ENCODE measurements at regions of chr3 and their contacts with region 1.

Region 1: GRCh38 chr3:125062888-125063618 is 7.3 kb upstream of the HEG1 start:
- DNase-seq: peak; percentile 71
- H3K4me3 ChIP-seq: no peak overlapping the region
- H3K27ac ChIP-seq: peak overlapping the region; percentile 25
- H3K4me1 ChIP-seq: peaks cover 20% of the 10 kb centered on the region
- H3K27me3 ChIP-seq: no peaks in the 10 kb centered on the region
- CTCF ChIP-seq: no peak
- POLR2A ChIP-seq: peak; percentile 51

Region 2: GRCh38 chr3:124383083-124383482 is 680.0 kb before region 1 on chr3:
- CTCF ChIA-PET with region 1: no interaction called
- POLR2A ChIA-PET with region 1: no interaction called
- dilution Hi-C with region 1: no loop called
- intact Hi-C with region 1: no loop called
- DNase-seq: no peak
- H3K4me3 ChIP-seq: no peak overlapping the region
- H3K27ac ChIP-seq: no peak overlapping the region
- H3K4me1 ChIP-seq: no peaks in the 10 kb centered on the region
- H3K27me3 ChIP-seq: no peaks in the 10 kb centered on the region
- CTCF ChIP-seq: no peak
- POLR2A ChIP-seq: no peak

Region 3: DNA sequence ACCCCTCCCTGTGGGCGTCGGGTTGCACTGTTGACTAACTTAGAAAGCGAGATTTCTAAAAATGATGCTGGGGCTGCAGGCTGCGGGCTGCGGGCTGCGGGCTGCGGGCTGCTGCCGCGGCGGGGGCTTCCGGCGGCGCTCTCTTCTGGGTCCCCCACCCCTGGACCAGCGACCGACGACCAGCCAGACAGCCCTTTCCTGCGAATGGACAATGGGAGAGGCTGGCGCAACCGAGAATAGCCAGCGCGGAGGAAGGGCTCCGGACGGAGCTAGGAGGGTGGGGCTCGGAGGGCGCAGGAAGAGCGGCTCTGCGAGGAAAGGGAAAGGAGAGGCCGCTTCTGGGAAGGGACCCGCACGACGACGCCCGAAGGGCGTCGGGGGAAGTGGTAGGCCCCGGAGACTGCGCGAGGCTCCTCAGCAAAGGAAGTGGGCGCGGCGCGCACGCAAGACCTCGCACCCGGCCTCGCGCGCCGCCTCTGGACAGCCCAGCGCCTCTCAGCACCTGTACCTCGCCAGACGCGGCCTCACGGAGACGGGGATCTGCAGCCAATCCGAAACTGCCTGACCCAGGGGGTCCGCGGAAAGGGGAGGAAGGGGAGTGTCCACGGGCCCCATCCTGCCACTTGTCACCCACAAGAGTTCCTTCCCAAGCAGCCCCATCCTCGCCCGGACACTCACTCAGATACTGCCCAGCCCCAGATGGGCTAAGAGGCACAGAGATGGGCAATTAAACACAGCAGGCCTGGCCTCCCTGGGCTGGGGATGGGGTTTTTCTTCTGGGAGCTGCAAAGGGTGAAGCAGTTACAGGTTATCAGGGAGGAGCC is 78.8 kb after region 1 on chr3:
- CTCF ChIA-PET with region 1: no interaction called
- POLR2A ChIA-PET with region 1: no interaction called
- dilution Hi-C with region 1: no loop called
- intact Hi-C with region 1: loop called (anchors 5 kb)
- DNase-seq: peak; percentile 37
- H3K4me3 ChIP-seq: peak overlapping the region in 2 of 3 experiments; percentile 10 to 35
- H3K27ac ChIP-seq: no peak overlapping the region
- H3K4me1 ChIP-seq: peaks cover 12% of the 10 kb centered on the region
- H3K27me3 ChIP-seq: no peaks in the 10 kb centered on the region
- CTCF ChIP-seq: peak in 1 of 2 donors; percentile 59
- POLR2A ChIP-seq: no peak

Region 4: GRCh38 chr3:125556314-125556713 is 493.3 kb after region 1 on chr3:
- CTCF ChIA-PET with region 1: no interaction called
- POLR2A ChIA-PET with region 1: no interaction called
- dilution Hi-C with region 1: no loop called
- intact Hi-C with region 1: no loop called
- DNase-seq: no peak
- H3K4me3 ChIP-seq: no peak overlapping the region
- H3K27ac ChIP-seq: no peak overlapping the region
- H3K4me1 ChIP-seq: no peaks in the 10 kb centered on the region
- H3K27me3 ChIP-seq: no peaks in the 10 kb centered on the region
- CTCF ChIP-seq: no peak
- POLR2A ChIP-seq: no peak